ENCODE measurements at regions of chr11 and their contacts with region 1.

Region 1: GRCh38 chr11:16713594-16713993 is 24.9 kb upstream of the C11orf58 start:
- DNase-seq: no peak
- ATAC-seq: no peak
- H3K4me3 ChIP-seq: no peak overlapping the region
- H3K27ac ChIP-seq: no peak overlapping the region
- H3K4me1 ChIP-seq: no peaks in the 10 kb centered on the region
- H3K27me3 ChIP-seq: no peaks in the 10 kb centered on the region

Region 2: DNA sequence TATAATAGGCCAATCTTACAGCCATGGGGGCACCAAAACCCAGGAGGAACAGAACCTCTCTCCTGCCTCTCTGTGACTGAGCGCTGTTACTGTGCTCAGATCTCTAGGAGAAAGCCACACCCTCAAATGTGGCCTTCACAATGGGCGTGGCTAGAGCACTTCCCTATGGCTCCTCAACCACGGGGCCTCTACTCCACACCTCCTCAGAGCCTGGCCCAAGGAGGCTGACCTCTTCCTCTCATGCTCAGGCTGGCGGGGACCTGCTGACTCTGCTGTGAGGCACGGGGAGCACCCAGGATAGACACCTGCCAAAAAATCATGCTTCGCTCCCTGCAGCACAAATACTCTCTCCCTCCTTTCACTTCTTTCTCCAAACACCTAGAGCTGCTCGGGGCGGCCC is 65.8 kb after region 1 on chr11:
- intact Hi-C with region 1: loop called in 1 of 2 experiments (anchors 10 kb)
- DNase-seq: peak in 1 of 2 donors; percentile 64
- ATAC-seq: no peak
- H3K4me3 ChIP-seq: no peak overlapping the region
- H3K27ac ChIP-seq: no peak overlapping the region
- H3K4me1 ChIP-seq: no peaks in the 10 kb centered on the region
- H3K27me3 ChIP-seq: no peaks in the 10 kb centered on the region

Measured in aorta (tissue), 5 donors.